ENCODE measurements at regions of chr3 and their contacts with region 1.

Region 1: DNA sequence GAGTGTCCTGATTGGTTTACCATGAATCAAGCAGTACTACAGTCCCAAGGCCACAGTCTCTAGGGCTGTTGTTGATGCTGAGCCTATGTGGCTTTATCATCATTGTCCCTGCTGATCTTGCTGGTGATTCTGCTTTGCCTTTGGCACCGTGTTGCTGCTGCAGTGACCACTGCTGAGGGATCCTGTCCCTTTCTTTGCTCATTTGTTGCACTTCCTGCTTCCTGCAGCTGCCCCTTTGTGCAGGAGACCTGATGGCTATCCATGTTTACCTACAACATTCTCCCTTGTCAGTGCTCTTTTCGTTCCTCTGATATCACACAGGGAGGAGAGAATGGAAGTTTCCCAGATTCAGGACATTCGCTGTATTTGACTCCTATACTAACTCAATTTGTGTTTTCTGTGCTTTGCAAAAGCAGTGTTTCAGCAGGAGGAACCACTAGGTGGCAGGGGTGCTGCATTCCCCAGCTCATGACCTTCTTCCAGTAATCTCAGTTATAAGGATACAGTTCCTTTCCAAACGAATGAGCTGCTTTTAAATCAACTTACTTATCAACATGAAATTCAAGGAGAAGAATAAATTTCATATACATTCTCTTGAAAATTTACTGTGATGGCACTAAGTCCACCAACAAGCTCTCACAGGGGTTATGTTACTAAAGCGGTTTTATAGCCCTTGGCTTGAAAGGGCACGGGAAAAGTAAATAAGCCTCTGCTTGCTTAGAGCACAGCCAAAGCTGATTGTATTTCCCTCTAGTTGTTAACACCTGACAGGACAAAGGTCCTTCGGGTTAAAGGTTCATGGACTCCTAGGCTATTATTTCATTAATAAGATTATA is 9.7 kb upstream of the THUMPD3 start:
- DNase-seq: peak; percentile 76
- ATAC-seq: peak; percentile 69
- H3K4me3 Mint-ChIP-seq: no peak overlapping the region
- H3K27ac Mint-ChIP-seq: peak overlapping the region; percentile 40
- H3K4me1 Mint-ChIP-seq: peaks cover 47% of the 10 kb centered on the region
- H3K27me3 Mint-ChIP-seq: no peaks in the 10 kb centered on the region

Region 2: DNA sequence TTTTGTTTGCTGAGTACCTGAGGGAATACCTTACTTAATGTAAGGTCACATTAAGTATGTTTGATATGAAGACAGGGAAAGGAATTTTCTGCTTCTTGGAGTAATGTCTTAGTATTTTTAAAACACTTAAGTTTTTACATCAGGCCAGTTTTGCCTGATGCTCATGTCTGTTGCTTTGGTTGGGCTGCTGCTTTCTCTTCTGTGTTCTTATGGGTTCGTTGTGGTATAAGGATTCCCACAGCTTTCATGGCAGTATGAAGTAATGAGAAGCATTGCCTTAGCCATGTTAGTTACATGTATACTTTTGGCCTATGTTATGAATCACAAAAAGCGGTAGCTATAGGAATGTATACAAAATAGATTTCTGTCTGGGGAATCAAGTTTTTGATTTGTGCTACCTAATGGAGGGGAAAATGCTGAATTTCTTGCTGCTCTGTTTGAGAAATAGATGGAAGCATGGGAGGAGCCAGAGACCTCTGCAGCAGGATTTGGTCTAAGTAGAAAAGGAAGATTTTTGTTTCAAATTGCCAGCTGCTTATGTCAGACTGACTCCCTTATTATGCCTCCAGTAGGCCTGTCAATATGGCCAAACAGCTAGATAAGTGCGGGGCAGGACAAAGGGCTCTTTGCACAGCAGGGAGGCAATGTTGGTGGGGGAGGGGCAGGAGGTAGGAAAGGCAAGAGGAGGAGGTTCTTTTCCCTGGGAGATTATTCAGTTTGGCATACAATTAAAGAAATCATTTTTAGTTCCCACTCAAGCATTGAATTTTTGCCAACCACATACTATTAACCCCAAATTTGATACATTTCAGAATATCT is 49.5 kb after region 1 on chr3:
- CTCF ChIA-PET with region 1: interaction called, 11 read pairs
- DNase-seq: no peak
- ATAC-seq: no peak
- H3K4me3 Mint-ChIP-seq: no peak overlapping the region
- H3K27ac Mint-ChIP-seq: no peak overlapping the region
- H3K4me1 Mint-ChIP-seq: peaks cover 56% of the 10 kb centered on the region
- H3K27me3 Mint-ChIP-seq: no peaks in the 10 kb centered on the region

Region 3: GRCh38 chr3:9452417-9452816 is 99.3 kb after region 1 on chr3:
- CTCF ChIA-PET with region 1: interaction called, 15 read pairs
- DNase-seq: no peak
- ATAC-seq: peak; percentile 83
- H3K4me3 Mint-ChIP-seq: peak overlapping the region; percentile 51
- H3K27ac Mint-ChIP-seq: peak overlapping the region; percentile 91
- H3K4me1 Mint-ChIP-seq: peaks cover 37% of the 10 kb centered on the region
- H3K27me3 Mint-ChIP-seq: no peaks in the 10 kb centered on the region

Measured in activated CD8-positive, alpha-beta memory T cell treated with anti-CD3 and anti-CD28 coated beads, Interleukin-2, amount 10 ng/mL, durations not matched to agents 7 days and 5 days (primary cell).